K562 (cell line): ENCODE measurements at regions of chr1 and their contacts with region 1.

Region 1: DNA sequence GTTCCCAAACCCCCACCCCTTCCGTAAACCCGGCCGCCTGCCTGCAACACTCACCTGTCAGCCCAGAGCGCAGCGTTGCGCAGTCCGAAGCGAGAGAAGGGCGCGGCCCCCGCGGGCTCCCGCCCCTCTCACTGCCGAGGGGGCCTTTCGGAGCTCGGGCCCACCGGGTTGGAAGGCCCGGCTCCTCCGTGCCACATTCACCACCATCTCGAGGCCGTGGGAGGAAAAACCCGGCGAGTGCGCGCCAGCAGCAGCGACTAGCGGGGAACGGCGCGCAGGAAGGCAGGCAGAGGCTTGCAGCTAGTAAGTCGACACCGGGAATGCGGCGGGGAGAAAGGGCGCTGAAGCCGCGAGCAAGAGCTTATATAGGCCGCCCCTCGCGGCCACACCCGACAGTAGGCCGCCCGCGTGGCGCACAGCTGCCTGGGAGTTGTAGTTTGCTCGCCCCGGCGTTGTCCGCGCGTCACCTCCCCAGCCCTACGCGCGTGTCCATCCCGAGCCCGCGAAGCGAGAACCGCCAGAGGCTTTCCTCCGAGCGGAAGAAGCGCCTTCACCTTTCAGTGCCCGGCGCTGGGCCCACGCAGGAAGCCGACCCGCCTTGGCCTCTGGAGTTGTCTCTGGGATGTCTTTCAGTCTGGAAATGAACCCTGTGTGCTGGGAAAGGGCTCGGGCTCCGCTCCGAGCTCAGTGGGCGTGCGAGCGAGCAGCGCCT is 10.4 kb upstream of the RAB42 start:
- DNase-seq: peak; percentile 93 to 99 (median 96)
- ATAC-seq: peak; percentile 92
- H3K4me3 ChIP-seq: peak overlapping the region; percentile 81
- H3K27ac ChIP-seq: peak overlapping the region; percentile 81
- H3K4me1 ChIP-seq: peaks cover 18 to 24% of the 10 kb centered on the region in 2 experiments; a peak in 4 of 5 replicates
- H3K27me3 ChIP-seq: no peaks in the 10 kb centered on the region
- CTCF ChIP-seq: peak in 2 of 3 experiments; percentile 1 to 25; a peak in 2 of 6 replicates
- EP300 ChIP-seq: peak; percentile 67
- POLR2A ChIP-seq: peak; percentile 100
- RAD21 ChIP-seq: peak in 1 of 2 experiments; percentile 21; a peak in 2 of 4 replicates

Region 2: DNA sequence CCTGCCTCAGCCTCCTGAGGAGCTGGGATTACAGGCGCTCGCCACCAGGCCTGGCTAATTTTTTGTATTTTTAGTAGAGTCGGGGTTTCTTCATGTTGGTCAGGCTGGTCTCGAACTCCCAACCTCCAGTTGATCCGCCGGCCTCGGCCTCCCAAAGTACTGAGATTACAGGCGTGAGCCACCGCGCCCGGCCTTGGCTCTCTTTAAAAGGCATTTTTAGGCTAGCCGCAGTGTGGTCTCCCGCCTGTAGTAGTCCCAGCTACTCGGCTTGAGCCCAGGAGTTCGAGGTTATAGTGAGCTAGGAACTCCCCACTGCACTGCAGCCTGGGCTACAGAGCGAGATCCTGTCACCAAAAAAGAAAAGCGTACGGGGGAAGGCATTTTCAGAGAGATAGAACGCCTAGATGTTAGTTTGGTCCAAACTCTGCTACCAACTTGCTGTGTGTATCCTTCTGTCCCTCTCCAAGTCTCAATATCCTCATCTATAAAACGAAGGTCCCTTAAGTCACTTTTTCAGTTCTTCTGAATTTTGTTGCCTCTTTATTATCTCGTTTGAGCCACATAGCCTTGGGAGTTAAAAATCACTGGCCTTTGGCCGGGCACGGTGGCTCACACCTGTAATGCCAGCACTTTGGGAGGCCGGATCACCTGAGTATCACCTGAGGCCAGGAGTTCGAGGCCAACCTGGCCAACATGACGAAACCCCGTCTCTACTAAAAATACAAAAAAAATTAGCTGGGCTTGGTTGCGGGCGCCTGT is 252.1 kb before region 1 on chr1:
- CTCF ChIA-PET with region 1: no interaction called
- POLR2A ChIA-PET with region 1: interaction called, 16 read pairs
- in situ Hi-C with region 1: no loop called
- intact Hi-C with region 1: no loop called
- DNase-seq: peak in 2 of 4 experiments; percentile 27 to 70
- ATAC-seq: peak; percentile 74
- H3K4me3 ChIP-seq: peak overlapping the region; percentile 72
- H3K27ac ChIP-seq: peak overlapping the region; percentile 84
- H3K4me1 ChIP-seq: peaks cover 17 to 33% of the 10 kb centered on the region in 2 experiments
- H3K27me3 ChIP-seq: no peaks in the 10 kb centered on the region
- CTCF ChIP-seq: no peak
- EP300 ChIP-seq: no peak
- POLR2A ChIP-seq: no peak
- RAD21 ChIP-seq: peak in 1 of 2 experiments; percentile 7; a peak in 1 of 4 replicates

Region 3: DNA sequence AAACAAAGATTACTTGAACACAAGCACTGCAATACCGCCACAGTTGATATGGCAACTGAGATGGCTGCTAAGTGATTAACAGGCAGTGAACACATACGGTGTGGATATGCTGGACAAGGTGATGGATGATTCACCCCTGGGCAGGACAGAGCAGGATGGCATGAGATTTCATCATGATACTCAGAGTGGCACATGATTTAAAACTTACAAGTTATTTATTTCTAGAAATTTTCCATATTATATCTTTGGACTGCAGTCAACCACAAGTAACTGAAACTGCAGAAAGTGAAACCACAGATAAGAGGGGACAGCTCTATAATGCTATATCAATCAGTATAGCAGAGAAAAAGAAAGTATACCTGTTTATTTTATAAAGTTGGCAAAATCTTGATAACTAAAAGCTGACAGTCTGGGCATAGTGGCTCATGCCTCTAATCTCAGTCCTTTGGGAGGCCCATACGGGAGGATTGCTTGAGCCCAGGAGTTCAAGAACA is 164.2 kb before region 1 on chr1:
- CTCF ChIA-PET with region 1: no interaction called
- POLR2A ChIA-PET with region 1: interaction called, 26 read pairs
- in situ Hi-C with region 1: no loop called
- intact Hi-C with region 1: no loop called
- DNase-seq: peak in 2 of 4 experiments; percentile 39 to 69
- ATAC-seq: peak; percentile 74
- H3K4me3 ChIP-seq: 0 out of 2 replicates have a peak overlapping the region, but pooled peaks have one; percentile 6
- H3K27ac ChIP-seq: peak overlapping the region; percentile 18
- H3K4me1 ChIP-seq: peaks cover 22 to 47% of the 10 kb centered on the region in 2 experiments
- H3K27me3 ChIP-seq: no peaks in the 10 kb centered on the region
- CTCF ChIP-seq: no peak
- EP300 ChIP-seq: peak; percentile 90
- POLR2A ChIP-seq: no peak
- RAD21 ChIP-seq: no peak

Region 4: DNA sequence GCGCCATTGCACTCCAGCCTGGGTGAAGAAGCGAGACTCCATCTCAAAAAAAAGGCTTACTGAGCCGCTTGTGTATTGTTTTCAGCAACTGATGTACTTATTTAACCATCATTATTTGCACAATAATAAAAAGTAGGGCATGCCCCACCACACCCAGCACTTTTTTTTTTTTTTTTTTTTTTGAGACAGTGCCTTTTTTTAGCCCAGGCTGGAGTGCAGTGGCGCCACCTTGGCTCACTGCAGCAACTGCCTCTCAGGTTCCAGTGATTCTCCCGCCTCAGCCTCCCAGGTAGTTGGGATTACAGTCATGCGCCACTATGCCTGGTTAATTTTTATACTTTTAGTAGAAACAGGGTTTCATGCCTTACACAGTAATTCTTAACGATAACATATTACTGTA is 41.0 kb before region 1 on chr1:
- CTCF ChIA-PET with region 1: no interaction called
- POLR2A ChIA-PET with region 1: interaction called, 28 read pairs
- in situ Hi-C with region 1: no loop called
- intact Hi-C with region 1: no loop called
- DNase-seq: peak in 1 of 4 experiments; percentile 41
- ATAC-seq: peak; percentile 37
- H3K4me3 ChIP-seq: no peak overlapping the region
- H3K27ac ChIP-seq: no peak overlapping the region
- H3K4me1 ChIP-seq: peaks cover 0 to 3% of the 10 kb centered on the region in 2 experiments; a peak in 2 of 5 replicates
- H3K27me3 ChIP-seq: no peaks in the 10 kb centered on the region
- CTCF ChIP-seq: peak in 2 of 3 experiments; percentile 40 to 47; a peak in 5 of 6 replicates
- EP300 ChIP-seq: no peak
- POLR2A ChIP-seq: no peak
- RAD21 ChIP-seq: no peak

Region 5: DNA sequence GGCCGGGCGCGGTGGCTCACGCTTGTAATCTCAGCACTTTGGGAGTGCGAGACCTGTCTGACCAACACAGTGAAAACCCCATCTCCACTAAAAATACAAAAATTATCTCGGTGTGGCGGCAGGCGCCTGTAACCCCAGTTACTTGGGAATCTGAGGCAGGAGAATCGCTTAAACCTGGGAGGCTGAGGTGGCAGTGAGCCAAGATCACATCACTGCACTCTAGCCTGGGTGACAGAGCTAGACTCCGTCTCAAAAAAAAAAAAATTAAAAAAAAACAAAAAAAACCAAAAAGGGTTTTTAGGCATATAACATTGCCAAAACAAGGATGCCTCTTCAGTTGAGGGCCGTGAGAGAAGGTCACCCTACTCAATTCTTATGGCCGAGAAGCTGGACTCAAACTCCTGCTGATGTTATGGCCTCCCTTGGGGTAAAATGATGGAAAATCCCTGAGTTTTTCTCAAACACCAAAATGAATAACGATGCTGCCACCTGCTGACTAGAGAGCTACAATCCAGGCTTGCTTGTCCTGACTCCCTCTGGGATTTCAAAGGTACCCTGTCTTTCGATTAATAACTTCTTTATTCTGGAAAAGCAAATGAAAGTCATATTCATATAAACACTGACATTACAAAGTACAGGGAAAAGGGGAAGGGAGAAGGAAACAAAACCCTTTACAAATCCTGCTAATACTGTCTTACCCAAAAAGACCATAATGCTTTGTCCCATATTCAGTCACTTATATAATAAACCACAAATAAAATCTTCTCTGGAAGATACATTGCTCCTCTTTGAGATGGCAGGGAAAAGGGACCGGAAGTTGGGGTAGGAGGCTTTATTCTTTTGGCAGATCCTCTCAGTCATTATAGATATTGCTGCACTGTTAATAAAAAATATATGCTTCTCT is 21.1 kb after region 1 on chr1:
- CTCF ChIA-PET with region 1: no interaction called
- POLR2A ChIA-PET with region 1: interaction called, 49 read pairs
- in situ Hi-C with region 1: no loop called
- intact Hi-C with region 1: no loop called
- DNase-seq: peak; percentile 67 to 86 (median 73)
- ATAC-seq: peak; percentile 91
- H3K4me3 ChIP-seq: no peak overlapping the region
- H3K27ac ChIP-seq: no peak overlapping the region
- H3K4me1 ChIP-seq: no peaks in the 10 kb centered on the region
- H3K27me3 ChIP-seq: no peaks in the 10 kb centered on the region
- CTCF ChIP-seq: peak; percentile 82 to 94 (median 86)
- EP300 ChIP-seq: no peak
- POLR2A ChIP-seq: no peak
- RAD21 ChIP-seq: peak; percentile 92 to 97

Region 6: DNA sequence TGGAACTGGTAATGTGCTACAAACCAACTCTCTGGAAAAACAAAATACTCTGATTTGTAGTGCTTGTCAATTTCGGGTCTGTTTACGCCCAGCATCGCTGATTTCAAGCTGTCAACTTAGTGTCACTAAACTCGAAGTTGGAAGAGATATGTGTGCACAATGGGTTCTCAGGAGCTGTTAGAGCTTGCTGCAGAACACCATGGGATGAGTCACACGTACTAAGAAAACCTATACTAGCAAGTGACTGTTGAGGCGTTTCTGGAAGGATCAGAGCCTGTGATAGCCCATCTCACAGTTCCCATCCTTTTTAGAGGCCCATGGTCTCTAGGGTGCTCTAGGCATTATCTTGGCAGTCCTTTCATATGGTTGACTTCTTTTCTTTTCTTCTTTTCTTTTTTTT is 101.1 kb after region 1 on chr1:
- CTCF ChIA-PET with region 1: no interaction called
- POLR2A ChIA-PET with region 1: no interaction called
- in situ Hi-C with region 1: no loop called
- intact Hi-C with region 1: no loop called
- DNase-seq: peak in 3 of 4 experiments; percentile 6 to 47 (median 11)
- ATAC-seq: no peak; the same call in 2 of the 3 replicates
- H3K4me3 ChIP-seq: no peak overlapping the region
- H3K27ac ChIP-seq: no peak overlapping the region
- H3K4me1 ChIP-seq: peaks cover 5 to 13% of the 10 kb centered on the region in 2 experiments; a peak in 4 of 5 replicates
- H3K27me3 ChIP-seq: no peaks in the 10 kb centered on the region
- CTCF ChIP-seq: no peak
- EP300 ChIP-seq: no peak
- POLR2A ChIP-seq: no peak
- RAD21 ChIP-seq: no peak

Region 7: DNA sequence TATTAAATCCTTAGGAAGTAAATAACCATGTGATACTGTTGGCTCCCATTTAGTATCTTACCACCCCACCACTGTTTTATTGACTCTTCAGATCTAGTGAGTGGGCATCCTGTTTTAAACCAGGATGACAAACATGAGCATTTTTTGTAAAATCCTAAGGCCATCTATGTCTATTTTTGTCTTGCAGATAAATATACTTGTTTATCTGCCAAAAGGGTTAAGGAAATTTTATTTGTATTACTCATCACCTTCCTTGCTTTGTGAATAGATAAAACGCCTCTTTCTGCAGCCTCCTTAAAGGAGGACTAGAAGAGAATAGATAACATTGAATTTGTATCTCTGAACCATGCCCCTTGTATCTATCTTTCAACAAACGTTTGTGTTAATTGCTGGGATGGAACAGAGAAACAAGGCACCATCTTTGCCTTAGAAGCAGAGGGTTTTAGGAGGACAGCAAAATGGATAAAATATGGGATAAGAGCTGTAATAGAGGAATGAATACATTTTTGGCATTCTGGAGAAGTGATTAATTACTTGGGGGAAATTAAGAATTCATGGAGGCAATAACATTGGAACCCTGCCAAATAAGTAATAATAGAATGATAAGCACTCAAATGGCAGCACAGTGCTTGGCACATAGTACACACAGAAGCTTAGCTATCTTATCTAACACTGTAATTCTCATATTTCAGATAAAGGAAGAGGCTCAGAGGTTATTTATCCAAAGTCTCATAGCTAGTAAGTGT is 169.8 kb after region 1 on chr1:
- CTCF ChIA-PET with region 1: no interaction called
- POLR2A ChIA-PET with region 1: interaction called, 13 read pairs
- in situ Hi-C with region 1: no loop called
- intact Hi-C with region 1: no loop called
- DNase-seq: peak in 2 of 4 experiments; percentile 31 to 40
- ATAC-seq: no peak
- H3K4me3 ChIP-seq: no peak overlapping the region
- H3K27ac ChIP-seq: no peak overlapping the region
- H3K4me1 ChIP-seq: peaks cover 28 to 43% of the 10 kb centered on the region in 2 experiments
- H3K27me3 ChIP-seq: no peaks in the 10 kb centered on the region
- CTCF ChIP-seq: no peak
- EP300 ChIP-seq: no peak; the same call in 1 of the 2 replicates
- POLR2A ChIP-seq: no peak
- RAD21 ChIP-seq: no peak

Region 8: GRCh38 chr1:29202584-29203340 is 621.1 kb after region 1 on chr1:
- CTCF ChIA-PET with region 1: no interaction called
- POLR2A ChIA-PET with region 1: no interaction called
- in situ Hi-C with region 1: no loop called
- intact Hi-C with region 1: no loop called
- DNase-seq: peak; percentile 95 to 99 (median 96)
- ATAC-seq: peak; percentile 99
- H3K4me3 ChIP-seq: no peak overlapping the region
- H3K27ac ChIP-seq: peak overlapping the region; percentile 78
- H3K4me1 ChIP-seq: peaks cover 22 to 27% of the 10 kb centered on the region in 2 experiments
- H3K27me3 ChIP-seq: no peaks in the 10 kb centered on the region
- CTCF ChIP-seq: peak; percentile 94 to 99 (median 99)
- EP300 ChIP-seq: peak; percentile 92
- POLR2A ChIP-seq: no peak
- RAD21 ChIP-seq: peak; percentile 99